Aorta (tissue), 5 donors: ENCODE measurements at regions of chr15 and their contacts with region 1.

Region 1: GRCh38 chr15:93900476-93901400 is 330.6 kb upstream of the MCTP2 start:
- DNase-seq: peak in 1 of 2 donors; percentile 64
- ATAC-seq: peak; percentile 29
- H3K4me3 ChIP-seq: no peak overlapping the region
- H3K27ac ChIP-seq: no peak overlapping the region
- H3K4me1 ChIP-seq: no peaks in the 10 kb centered on the region
- H3K27me3 ChIP-seq: no peaks in the 10 kb centered on the region

Region 2: GRCh38 chr15:93965304-93965908 is 64.7 kb after region 1 on chr15:
- intact Hi-C with region 1: loop called in 1 of 2 experiments (anchors 10 kb)
- DNase-seq: no peak
- ATAC-seq: no peak
- H3K4me3 ChIP-seq: no peak overlapping the region
- H3K27ac ChIP-seq: no peak overlapping the region
- H3K4me1 ChIP-seq: no peaks in the 10 kb centered on the region
- H3K27me3 ChIP-seq: no peaks in the 10 kb centered on the region

Region 3: GRCh38 chr15:93997084-93997918 is 96.6 kb after region 1 on chr15:
- intact Hi-C with region 1: no loop called
- DNase-seq: no peak
- ATAC-seq: no peak
- H3K4me3 ChIP-seq: no peak overlapping the region
- H3K27ac ChIP-seq: no peak overlapping the region
- H3K4me1 ChIP-seq: no peaks in the 10 kb centered on the region
- H3K27me3 ChIP-seq: no peaks in the 10 kb centered on the region